ENCODE measurements at regions of chr7 and their contacts with region 1.

Region 1: DNA sequence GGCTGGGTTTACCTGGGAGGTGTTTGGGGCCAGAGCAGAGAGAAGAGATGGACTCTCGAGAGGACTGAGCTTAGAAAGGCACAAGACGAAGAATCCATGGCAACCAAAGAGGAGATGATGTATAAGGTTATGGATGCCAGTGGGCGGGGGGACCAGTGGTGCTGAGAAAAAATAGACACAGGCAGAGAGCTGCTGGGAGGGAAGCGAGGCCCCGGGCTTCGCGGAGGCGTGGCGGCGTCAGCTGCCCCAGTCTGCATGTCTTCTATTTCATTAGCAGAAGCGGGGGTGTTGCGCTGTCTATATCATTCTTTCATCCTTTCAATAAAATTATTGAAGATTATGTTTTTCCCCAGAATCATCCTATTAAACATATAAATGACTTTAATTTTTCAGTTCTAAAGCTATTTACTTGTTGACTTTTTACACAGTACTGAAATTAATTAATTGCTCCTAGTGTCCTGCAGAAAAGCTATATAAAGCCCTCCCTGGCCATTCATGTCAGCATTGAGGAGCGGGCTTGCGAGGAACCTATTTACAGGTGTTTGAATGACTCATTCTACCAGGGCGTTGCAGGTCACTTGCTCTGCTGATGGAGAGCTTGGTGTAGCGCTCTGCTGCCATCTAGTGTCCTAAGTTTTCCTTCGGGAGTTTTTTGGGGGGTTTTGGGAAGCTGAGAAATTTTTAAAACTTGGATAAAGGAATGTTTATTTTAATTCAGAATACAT is 42.9 kb upstream of the BHLHA15 start:
- DNase-seq: peak; percentile 51
- ATAC-seq: peak; percentile 48
- H3K4me3 Mint-ChIP-seq: no peak overlapping the region
- H3K27ac Mint-ChIP-seq: no peak overlapping the region
- H3K4me1 Mint-ChIP-seq: peaks cover 3% of the 10 kb centered on the region
- H3K27me3 Mint-ChIP-seq: no peaks in the 10 kb centered on the region
- CTCF ChIP-seq: peak; percentile 81

Region 2: DNA sequence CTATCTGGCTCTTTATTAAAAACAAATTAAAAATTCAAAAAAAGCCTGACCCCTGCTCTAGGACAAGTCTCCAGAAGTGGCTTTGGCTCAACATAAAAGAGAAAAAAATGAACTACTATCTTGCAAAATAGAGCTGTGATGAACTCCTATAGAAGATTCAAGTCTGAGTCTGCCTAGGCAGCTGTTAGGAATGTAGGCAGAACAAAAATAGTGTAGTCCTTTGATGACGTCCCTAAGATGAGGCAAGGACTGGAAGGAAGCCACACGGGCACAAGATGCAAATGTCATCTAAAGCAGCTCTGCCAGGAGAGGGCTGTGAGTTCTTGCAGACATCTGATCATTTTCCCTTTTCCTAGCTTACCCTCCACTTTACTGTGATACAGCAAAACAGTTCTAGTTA is 316.7 kb before region 1 on chr7:
- CTCF ChIA-PET with region 1: no interaction called
- POLR2A ChIA-PET with region 1: no interaction called
- intact Hi-C with region 1: no loop called
- DNase-seq: no peak
- ATAC-seq: no peak
- H3K4me3 Mint-ChIP-seq: no peak overlapping the region
- H3K27ac Mint-ChIP-seq: no peak overlapping the region
- H3K4me1 Mint-ChIP-seq: no peaks in the 10 kb centered on the region
- H3K27me3 Mint-ChIP-seq: no peaks in the 10 kb centered on the region
- CTCF ChIP-seq: no peak

Region 3: DNA sequence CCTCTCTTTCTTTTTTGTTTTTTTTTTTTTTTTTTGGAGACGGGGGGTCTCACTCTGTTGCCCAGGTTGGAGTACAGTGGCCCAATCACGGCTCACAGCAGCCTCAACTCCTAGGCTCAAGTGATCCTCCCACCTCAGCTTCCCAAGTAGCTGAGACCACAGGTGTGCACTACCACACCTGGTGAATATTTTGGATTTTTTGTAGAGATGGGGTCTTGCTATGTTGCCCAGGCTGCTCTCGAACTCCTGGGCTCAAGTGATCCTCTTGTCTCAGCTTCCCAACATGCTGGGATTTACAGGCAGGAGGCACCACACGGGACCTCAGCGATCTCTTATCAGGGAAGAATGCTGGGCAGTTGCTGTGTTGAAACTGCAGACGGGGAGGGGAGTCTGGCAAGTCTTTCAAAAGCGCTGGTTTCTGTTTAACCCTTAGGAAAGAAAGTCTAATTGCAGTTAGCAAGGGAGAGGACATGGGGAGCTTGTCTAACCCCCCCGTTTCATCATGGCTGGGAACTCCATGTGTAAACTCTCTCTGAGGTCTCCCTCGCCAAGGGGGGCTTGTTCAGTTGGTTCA is 101.3 kb before region 1 on chr7:
- CTCF ChIA-PET with region 1: no interaction called
- POLR2A ChIA-PET with region 1: no interaction called
- intact Hi-C with region 1: no loop called
- DNase-seq: no peak
- ATAC-seq: no peak
- H3K4me3 Mint-ChIP-seq: no peak overlapping the region
- H3K27ac Mint-ChIP-seq: no peak overlapping the region
- H3K4me1 Mint-ChIP-seq: no peaks in the 10 kb centered on the region
- H3K27me3 Mint-ChIP-seq: peaks cover 7% of the 10 kb centered on the region
- CTCF ChIP-seq: no peak

Region 4: DNA sequence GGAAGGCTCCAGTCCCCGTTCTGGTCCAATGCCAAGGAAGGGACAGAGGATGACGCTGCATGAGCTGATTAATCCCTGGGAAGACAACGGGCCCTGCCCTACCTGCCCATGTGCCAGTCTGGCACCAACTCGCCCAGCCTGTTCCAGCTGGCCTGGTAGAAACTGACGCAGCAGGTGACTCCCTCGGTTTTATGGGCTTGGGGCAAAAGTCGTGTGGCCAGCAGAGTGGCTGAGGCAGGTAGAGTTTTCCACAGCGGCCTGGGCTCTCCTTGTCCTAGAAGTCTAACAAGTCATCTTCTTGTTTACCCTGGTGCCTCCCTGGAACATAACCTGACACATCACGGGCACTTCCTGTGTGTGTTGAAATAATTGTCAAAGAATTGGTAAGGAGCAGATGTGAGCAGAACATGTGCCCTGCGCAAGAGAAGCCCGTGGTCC is 82.0 kb before region 1 on chr7:
- CTCF ChIA-PET with region 1: no interaction called
- POLR2A ChIA-PET with region 1: no interaction called
- intact Hi-C with region 1: no loop called
- DNase-seq: no peak
- ATAC-seq: no peak
- H3K4me3 Mint-ChIP-seq: no peak overlapping the region
- H3K27ac Mint-ChIP-seq: no peak overlapping the region
- H3K4me1 Mint-ChIP-seq: no peaks in the 10 kb centered on the region
- H3K27me3 Mint-ChIP-seq: peaks cover 3% of the 10 kb centered on the region
- CTCF ChIP-seq: no peak

Region 5: GRCh38 chr7:98106647-98107445 is 61.5 kb before region 1 on chr7 and contains the start of gene LMTK2:
- CTCF ChIA-PET with region 1: interaction called, 79 read pairs
- POLR2A ChIA-PET with region 1: interaction called, 3 read pairs
- intact Hi-C with region 1: loop called (anchors 2 kb)
- DNase-seq: peak; percentile 97
- ATAC-seq: peak; percentile 100
- H3K4me3 Mint-ChIP-seq: peak within 1 kb of the TSS; percentile 96
- H3K27ac Mint-ChIP-seq: peak within 1 kb of the TSS; percentile 90
- H3K4me1 Mint-ChIP-seq: peaks cover 36% of the 10 kb centered on the region
- H3K27me3 Mint-ChIP-seq: peaks cover 6% of the 10 kb centered on the region
- CTCF ChIP-seq: peak; percentile 79
- total RNA-seq, gene LMTK2: 9.4 to 11.5 TPM

Region 6: DNA sequence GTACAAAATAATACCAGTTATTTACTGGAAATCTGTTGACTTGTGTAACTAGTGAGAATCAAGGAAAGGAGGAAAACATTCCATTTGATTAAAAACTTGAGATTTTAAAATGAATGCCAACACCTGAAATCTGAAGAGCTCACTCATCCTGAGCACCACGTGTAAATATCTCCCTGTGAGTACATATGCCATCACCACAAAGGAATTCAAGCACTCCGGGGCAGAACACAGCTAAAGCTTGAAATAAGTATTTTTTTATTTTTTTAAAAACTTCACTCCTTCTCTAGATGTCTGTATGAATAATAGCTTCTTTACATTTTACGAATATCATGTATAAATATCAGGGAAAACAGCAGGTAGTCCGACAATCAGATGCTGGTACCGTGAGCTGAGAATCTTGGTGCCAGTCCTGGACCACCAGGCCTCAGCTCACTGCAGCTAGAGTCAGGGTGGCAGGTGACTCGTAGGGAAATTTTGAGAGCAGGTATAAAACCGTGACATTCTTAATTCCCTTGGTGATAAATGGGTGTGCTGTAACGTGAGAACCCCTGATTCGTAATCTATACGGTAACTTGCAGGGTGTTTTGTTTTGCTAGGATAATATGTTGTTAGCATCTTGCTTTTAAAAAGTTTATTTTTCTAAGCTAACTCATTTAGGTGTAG is 49.0 kb before region 1 on chr7:
- CTCF ChIA-PET with region 1: interaction called, 12 read pairs
- POLR2A ChIA-PET with region 1: no interaction called
- intact Hi-C with region 1: no loop called
- DNase-seq: no peak
- ATAC-seq: no peak
- H3K4me3 Mint-ChIP-seq: no peak overlapping the region
- H3K27ac Mint-ChIP-seq: no peak overlapping the region
- H3K4me1 Mint-ChIP-seq: peaks cover 18% of the 10 kb centered on the region
- H3K27me3 Mint-ChIP-seq: no peaks in the 10 kb centered on the region
- CTCF ChIP-seq: no peak

Region 7: DNA sequence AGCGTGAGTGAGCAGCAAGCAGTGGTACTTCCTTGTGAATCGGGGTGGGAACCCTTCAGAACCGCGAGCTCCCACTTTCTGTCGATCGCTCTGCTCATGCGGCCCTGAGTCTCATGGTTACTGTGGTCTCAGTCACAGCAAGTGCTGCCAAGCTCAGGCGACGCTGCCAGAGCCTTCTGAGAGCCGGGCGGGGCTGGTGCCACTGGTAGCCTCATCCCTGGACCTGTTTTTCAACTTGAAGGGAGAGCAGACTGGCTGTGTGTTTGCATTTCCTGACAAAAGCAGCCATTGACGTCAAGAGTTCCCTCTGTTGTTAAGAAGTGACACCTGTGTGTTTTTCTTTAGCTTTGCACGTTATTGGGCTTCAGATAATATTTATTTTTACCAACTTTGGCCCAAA is 10.0 kb after region 1 on chr7:
- CTCF ChIA-PET with region 1: interaction called, 11 read pairs
- POLR2A ChIA-PET with region 1: no interaction called
- intact Hi-C with region 1: no loop called
- DNase-seq: no peak
- ATAC-seq: no peak
- H3K4me3 Mint-ChIP-seq: no peak overlapping the region
- H3K27ac Mint-ChIP-seq: no peak overlapping the region
- H3K4me1 Mint-ChIP-seq: no peaks in the 10 kb centered on the region
- H3K27me3 Mint-ChIP-seq: no peaks in the 10 kb centered on the region
- CTCF ChIP-seq: no peak